ENCODE measurements at regions of chr1 and their contacts with region 1.

Region 1: GRCh38 chr1:201970334-201971159 is 11.9 kb upstream of the RNPEP start:
- DNase-seq: no peak
- H3K4me3 ChIP-seq: no peak overlapping the region
- H3K27ac ChIP-seq: no peak overlapping the region
- H3K4me1 ChIP-seq: peaks cover 5 to 8% (median 7%) of the 10 kb centered on the region in 3 donors
- H3K27me3 ChIP-seq: no peaks in the 10 kb centered on the region
- CTCF ChIP-seq: no peak
- POLR2A ChIP-seq: no peak

Region 2: DNA sequence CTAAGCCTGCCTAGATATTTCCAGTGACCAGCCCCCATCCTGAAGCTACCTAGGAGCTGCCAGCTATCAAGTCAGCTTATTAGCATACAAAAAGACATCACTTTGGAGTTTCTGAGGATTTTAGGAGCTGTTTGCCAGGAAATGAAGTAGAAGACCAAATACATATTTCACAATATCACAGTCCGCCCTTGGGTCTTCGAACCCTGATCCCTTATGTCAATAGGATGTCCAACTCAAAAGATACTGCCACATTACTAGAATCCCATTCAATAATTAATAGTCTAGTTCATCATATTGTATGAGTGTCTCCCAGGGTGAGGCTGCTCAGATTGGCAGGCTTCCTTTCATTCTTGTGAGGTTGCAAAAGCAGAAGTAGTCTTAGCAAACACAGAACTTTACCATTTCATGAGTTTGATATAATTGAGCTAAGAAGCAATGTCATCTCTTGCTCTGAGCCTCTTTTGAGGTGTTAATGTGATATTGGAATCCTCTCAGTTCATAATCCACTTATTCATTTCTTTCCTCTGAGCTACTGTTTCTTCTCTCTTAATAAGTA is 128.0 kb before region 1 on chr1:
- intact Hi-C with region 1: no loop called
- DNase-seq: no peak
- H3K4me3 ChIP-seq: no peak overlapping the region
- H3K27ac ChIP-seq: no peak overlapping the region
- H3K4me1 ChIP-seq: peaks cover 0 to 4% (median 0%) of the 10 kb centered on the region in 3 donors
- H3K27me3 ChIP-seq: no peaks in the 10 kb centered on the region
- CTCF ChIP-seq: no peak
- POLR2A ChIP-seq: no peak

Region 3: GRCh38 chr1:201877877-201878401 is 92.6 kb before region 1 on chr1:
- intact Hi-C with region 1: loop called (anchors 5 kb)
- DNase-seq: no peak
- H3K4me3 ChIP-seq: no peak overlapping the region
- H3K27ac ChIP-seq: peak overlapping the region in 1 of 4 donors; percentile 13
- H3K4me1 ChIP-seq: peaks cover 3 to 20% (median 7%) of the 10 kb centered on the region in 3 donors
- H3K27me3 ChIP-seq: no peaks in the 10 kb centered on the region
- CTCF ChIP-seq: peak in 5 of 6 experiments; percentile 44 to 71 (median 57)
- POLR2A ChIP-seq: no peak

Region 4: DNA sequence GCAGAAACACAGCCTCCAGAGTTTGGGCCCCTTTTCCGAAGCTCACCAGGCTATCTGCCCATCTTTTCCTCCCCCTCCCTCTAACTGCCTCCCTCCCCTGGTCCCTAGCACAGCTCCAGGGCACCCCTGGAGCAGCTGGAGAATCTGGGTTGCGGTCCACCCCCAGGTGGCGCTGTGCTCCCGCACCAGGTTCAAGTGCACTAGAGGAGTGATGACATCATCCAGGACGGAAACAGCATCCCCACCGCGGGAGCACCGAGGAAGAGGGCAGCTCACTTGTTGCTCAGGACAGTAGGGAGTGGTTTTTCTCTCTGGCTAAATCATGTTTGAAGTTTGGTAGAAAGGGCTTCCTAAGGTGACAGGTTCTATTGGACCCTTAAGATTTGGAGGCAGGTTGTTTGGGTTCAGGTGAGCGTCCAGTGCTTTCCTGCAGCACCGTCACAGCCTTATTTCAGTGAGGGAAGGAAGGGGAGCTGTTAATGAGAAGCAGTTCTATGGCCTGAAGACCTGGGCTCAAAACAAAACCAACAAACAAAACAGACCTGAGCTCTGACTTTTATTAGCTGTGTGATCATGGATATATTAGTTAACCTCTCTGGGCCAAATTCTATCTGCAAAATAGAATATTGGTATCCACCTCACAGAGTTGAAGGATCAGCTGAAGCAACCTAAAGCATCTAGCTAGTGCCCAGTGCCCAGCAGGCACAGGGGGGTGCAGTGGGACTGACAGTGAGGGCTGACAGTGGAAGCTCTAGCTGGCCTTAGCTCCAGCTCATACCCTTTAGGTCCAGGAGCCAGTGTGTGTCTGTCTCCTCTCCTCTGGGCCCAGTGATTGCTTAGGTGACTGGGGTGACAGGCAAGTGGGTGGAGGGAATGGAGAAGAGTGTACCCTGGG is 74.4 kb before region 1 on chr1:
- intact Hi-C with region 1: loop called (anchors 5 kb)
- DNase-seq: no peak
- H3K4me3 ChIP-seq: no peak overlapping the region
- H3K27ac ChIP-seq: peak overlapping the region; percentile 7 to 85 (median 76)
- H3K4me1 ChIP-seq: peaks cover 0 to 72% (median 0%) of the 10 kb centered on the region in 3 donors
- H3K27me3 ChIP-seq: peaks cover 0 to 2% (median 0%) of the 10 kb centered on the region in 4 donors
- CTCF ChIP-seq: peak; percentile 91 to 97 (median 92)
- POLR2A ChIP-seq: no peak